A549 (cell line): ENCODE measurements at regions of chr19 and their contacts with region 1.

Region 1: GRCh38 chr19:33241530-33242101 is 16.0 kb upstream of the SLC7A10 start:
- DNase-seq: peak in 1 of 2 experiments; percentile 45
- ATAC-seq: peak; percentile 22 to 73; a peak in 4 of 6 replicates
- H3K4me3 ChIP-seq: no peak overlapping the region
- H3K27ac ChIP-seq: peak overlapping the region in 1 of 2 experiments; percentile 46; a peak in 3 of 6 replicates
- H3K4me1 ChIP-seq: 0 out of 3 replicates have a peak, but pooled peaks cover 3% of the 10 kb centered on the region
- CTCF ChIP-seq: peak; percentile 98
- EP300 ChIP-seq: no peak
- POLR2A ChIP-seq: no peak
- RAD21 ChIP-seq: peak; percentile 97 to 100

Region 2: DNA sequence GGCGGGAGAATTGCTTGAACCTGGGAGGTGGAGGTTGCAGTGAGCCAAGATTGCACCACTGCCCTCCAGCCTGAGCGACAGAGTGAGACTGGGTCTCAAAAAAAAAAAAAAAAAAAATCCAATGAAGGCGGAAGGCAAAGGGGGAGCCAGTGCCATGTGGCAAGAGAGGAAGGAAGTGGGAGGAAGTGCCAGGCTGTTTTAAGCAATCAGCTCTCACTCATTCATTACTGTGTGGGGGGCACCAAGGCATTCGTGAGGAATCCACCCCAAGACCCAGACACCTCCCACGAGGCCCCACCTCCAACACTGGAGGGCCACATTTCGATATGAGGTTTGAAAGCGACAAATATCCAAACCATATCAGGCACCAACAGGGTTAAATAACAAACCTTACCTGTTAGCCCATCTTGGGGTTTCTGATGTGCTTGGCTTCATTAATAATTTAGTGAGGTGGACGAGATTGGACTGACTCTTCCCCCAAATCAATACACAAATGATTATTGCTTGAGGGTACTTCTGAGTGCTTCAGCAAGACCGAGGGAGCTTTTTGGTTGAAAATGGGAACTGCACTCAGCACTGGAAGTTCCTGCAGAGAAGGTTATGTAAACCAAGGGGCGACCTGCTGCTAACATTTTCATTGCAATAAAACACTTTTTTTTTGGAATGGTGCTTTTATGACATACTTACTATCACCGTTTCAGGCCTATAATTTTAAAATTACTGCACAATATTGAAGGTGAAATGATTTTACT is 55.0 kb before region 1 on chr19:
- CTCF ChIA-PET with region 1: interaction called, 11 read pairs
- POLR2A ChIA-PET with region 1: no interaction called
- DNase-seq: no peak
- ATAC-seq: no peak
- H3K4me3 ChIP-seq: no peak overlapping the region
- H3K27ac ChIP-seq: no peak overlapping the region
- H3K4me1 ChIP-seq: no peaks in the 10 kb centered on the region
- CTCF ChIP-seq: no peak
- EP300 ChIP-seq: no peak
- POLR2A ChIP-seq: no peak
- RAD21 ChIP-seq: no peak

Region 3: DNA sequence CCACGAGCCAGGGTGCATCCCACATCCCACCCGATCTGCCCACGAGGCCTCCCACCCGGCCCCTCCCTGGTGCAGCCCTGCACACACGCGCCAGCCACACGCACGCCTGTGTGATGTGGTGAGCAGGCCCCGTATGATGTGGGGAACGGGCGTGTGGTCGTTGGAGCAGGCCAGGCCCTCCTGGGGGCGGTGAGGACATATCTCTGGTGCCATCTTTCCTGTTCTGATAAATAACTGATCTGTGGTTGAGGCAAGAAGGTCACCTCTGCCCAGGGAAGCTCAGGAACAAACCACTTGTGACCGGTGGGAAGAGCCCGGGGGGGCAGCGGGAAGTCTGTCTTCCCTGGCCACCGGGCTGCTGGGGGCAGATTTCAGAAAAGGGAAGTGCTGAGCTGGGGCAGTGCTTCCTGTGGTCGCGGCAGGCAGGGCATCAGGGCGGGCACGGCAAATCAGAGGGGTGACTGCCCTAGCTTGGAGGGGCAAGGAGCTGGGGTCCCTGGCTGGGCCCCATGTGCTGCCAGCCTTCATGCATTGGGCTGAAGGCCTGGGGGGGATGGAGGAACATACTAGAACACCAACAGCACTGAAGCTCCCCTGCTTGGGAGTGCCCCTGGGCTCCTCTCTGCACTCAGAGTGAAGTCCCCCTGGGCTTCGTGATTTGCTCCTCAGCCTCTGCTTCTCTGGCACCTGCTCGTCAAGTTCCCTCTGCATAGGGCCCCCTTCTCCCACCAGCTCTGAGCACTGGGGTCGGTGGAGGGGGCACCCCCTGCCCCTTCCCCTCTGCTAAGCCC is 19.2 kb after region 1 on chr19:
- CTCF ChIA-PET with region 1: interaction called, 105 read pairs
- POLR2A ChIA-PET with region 1: no interaction called
- DNase-seq: no peak
- ATAC-seq: 0 out of 6 replicates have a peak, but pooled peaks of 1 of the 2 experiments have one; percentile 7
- H3K4me3 ChIP-seq: no peak overlapping the region
- H3K27ac ChIP-seq: no peak overlapping the region
- H3K4me1 ChIP-seq: no peaks in the 10 kb centered on the region
- CTCF ChIP-seq: no peak
- EP300 ChIP-seq: no peak
- POLR2A ChIP-seq: no peak
- RAD21 ChIP-seq: no peak

Region 4: DNA sequence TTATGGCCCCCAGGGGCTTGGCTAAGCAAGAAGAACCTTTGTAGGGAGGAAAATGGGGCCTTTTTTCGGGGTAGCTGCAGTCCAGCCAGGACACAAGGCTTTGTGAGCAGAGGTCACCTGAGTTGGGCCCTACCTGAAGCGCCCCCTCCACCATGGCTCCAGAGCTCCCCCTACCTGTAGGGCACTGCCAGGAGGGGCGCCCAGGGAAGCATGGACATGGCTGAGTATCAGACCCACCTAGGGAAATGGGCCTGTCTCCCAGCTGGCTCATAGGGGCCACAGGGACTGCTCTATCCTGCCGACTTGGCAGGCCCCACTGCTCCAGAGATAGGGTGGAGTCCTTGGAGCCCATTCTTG is 69.7 kb after region 1 on chr19:
- CTCF ChIA-PET with region 1: interaction called, 603 read pairs
- POLR2A ChIA-PET with region 1: no interaction called
- DNase-seq: no peak
- ATAC-seq: peak; percentile 61 to 77; a peak in 5 of 6 replicates
- H3K4me3 ChIP-seq: no peak overlapping the region
- H3K27ac ChIP-seq: no peak overlapping the region
- H3K4me1 ChIP-seq: peaks cover 8% of the 10 kb centered on the region
- CTCF ChIP-seq: peak; percentile 48
- EP300 ChIP-seq: no peak
- POLR2A ChIP-seq: no peak
- RAD21 ChIP-seq: peak; percentile 56 to 63

Region 5: DNA sequence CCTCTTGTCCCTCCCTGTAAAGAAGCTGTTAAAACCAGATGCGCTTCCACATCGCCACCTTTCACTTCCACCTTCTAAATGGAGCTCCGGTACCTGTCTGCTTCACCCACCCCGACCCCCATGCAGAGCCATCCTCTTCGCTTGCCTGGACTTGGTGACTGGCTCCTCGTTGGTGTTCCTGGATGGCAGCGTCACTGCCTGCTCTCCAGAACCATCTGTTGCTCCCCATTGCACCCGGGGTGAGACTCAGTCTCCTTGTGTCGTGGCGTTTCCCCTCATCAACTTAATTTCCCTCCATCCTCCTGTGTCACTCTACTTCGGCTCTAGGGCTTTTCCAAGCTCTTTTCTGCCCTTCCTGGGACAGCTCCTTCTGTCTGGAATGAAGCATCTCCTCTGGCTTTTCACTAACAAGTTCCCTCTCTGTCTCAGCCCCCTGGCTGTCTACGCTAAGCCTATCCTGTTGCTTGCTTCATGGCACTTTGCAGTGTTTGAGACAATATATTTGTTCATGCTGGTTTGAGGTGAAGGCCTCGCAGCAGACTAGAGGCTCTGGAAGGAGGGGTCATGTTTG is 142.2 kb after region 1 on chr19:
- CTCF ChIA-PET with region 1: interaction called, 1,493 read pairs
- POLR2A ChIA-PET with region 1: no interaction called
- DNase-seq: no peak
- ATAC-seq: no peak
- H3K4me3 ChIP-seq: no peak overlapping the region
- H3K27ac ChIP-seq: no peak overlapping the region
- H3K4me1 ChIP-seq: no peaks in the 10 kb centered on the region; the same call in 2 of the 3 replicates
- CTCF ChIP-seq: no peak
- EP300 ChIP-seq: no peak
- POLR2A ChIP-seq: no peak
- RAD21 ChIP-seq: no peak

Region 6: GRCh38 chr19:33612928-33613619 is 371.5 kb after region 1 on chr19:
- CTCF ChIA-PET with region 1: no interaction called
- POLR2A ChIA-PET with region 1: no interaction called
- DNase-seq: no peak
- ATAC-seq: peak in 1 of 2 experiments; percentile 26; a peak in 3 of 6 replicates
- H3K4me3 ChIP-seq: no peak overlapping the region
- H3K27ac ChIP-seq: no peak overlapping the region
- H3K4me1 ChIP-seq: no peaks in the 10 kb centered on the region
- CTCF ChIP-seq: no peak
- EP300 ChIP-seq: no peak
- POLR2A ChIP-seq: no peak
- RAD21 ChIP-seq: no peak